GM12878 (cell line): ENCODE measurements at regions of chr12 and their contacts with region 1.

Region 1: GRCh38 chr12:79690638-79691493 is at the start of gene PAWR:
- DNase-seq: no peak
- ATAC-seq: peak; percentile 68
- H3K4me3 ChIP-seq: peak within 1 kb of the TSS; percentile 96
- H3K27ac ChIP-seq: peak within 1 kb of the TSS; percentile 86
- H3K4me1 ChIP-seq: 0 out of 2 replicates have a peak, but pooled peaks cover 5% of the 10 kb centered on the region
- H3K27me3 ChIP-seq: no peaks in the 10 kb centered on the region
- CTCF ChIP-seq: peak; percentile 19 to 57 (median 31); a peak in 4 of 6 replicates
- EP300 ChIP-seq: no peak
- POLR2A ChIP-seq: 0 out of 2 replicates have a peak, but pooled peaks have one; percentile 46
- RAD21 ChIP-seq: peak; percentile 39
- polyA plus RNA-seq, gene PAWR: 8.1 to 10.0 TPM

Region 2: GRCh38 chr12:79547735-79548609 is 142.9 kb before region 1 on chr12:
- CTCF ChIA-PET with region 1: interaction called, 24 read pairs
- POLR2A ChIA-PET with region 1: no interaction called
- RAD21 ChIA-PET with region 1: interaction called, 10 read pairs
- SMC1A ChIA-PET with region 1: interaction called, 9 read pairs
- in situ Hi-C with region 1: no loop called
- intact Hi-C with region 1: loop called (anchors 2 kb)
- DNase-seq: peak; percentile 9
- ATAC-seq: peak; percentile 88
- H3K4me3 ChIP-seq: no peak overlapping the region
- H3K27ac ChIP-seq: no peak overlapping the region
- H3K4me1 ChIP-seq: no peaks in the 10 kb centered on the region
- H3K27me3 ChIP-seq: no peaks in the 10 kb centered on the region
- CTCF ChIP-seq: peak; percentile 69 to 74 (median 71)
- EP300 ChIP-seq: no peak
- POLR2A ChIP-seq: no peak
- RAD21 ChIP-seq: peak; percentile 74

Region 3: GRCh38 chr12:79601909-79602308 is 89.0 kb before region 1 on chr12:
- CTCF ChIA-PET with region 1: no interaction called
- POLR2A ChIA-PET with region 1: interaction called, 3 read pairs
- RAD21 ChIA-PET with region 1: interaction called, 5 read pairs
- SMC1A ChIA-PET with region 1: interaction called, 3 read pairs
- in situ Hi-C with region 1: no loop called
- intact Hi-C with region 1: loop called (anchors 5 kb)
- DNase-seq: no peak
- ATAC-seq: no peak
- H3K4me3 ChIP-seq: no peak overlapping the region
- H3K27ac ChIP-seq: no peak overlapping the region
- H3K4me1 ChIP-seq: no peaks in the 10 kb centered on the region
- H3K27me3 ChIP-seq: no peaks in the 10 kb centered on the region
- CTCF ChIP-seq: no peak
- EP300 ChIP-seq: no peak
- POLR2A ChIP-seq: no peak
- RAD21 ChIP-seq: no peak

Region 4: DNA sequence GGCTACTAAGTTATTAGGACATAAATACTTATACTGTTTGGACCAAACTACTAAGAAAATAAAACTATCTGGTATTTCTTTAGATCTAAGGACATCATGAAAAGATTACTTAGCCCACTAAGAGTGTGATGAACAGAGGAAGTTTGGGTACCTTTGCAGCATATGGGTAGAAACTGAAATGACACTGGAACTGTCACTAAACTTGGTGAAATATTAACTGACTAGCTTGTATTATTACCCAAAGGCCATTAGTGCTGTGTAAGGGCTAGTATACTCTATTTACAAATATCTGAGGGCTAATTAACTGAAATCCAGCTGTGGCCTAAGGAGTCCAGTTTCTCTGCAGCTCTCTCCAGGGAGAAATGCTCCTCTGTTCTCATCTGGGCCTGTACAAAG is 45.6 kb before region 1 on chr12:
- CTCF ChIA-PET with region 1: interaction called, 6 read pairs
- POLR2A ChIA-PET with region 1: interaction called, 4 read pairs
- RAD21 ChIA-PET with region 1: interaction called, 11 read pairs
- SMC1A ChIA-PET with region 1: interaction called, 21 read pairs
- in situ Hi-C with region 1: no loop called
- intact Hi-C with region 1: loop called (anchors 5 kb)
- DNase-seq: peak; percentile 13
- ATAC-seq: peak; percentile 95
- H3K4me3 ChIP-seq: no peak overlapping the region
- H3K27ac ChIP-seq: no peak overlapping the region
- H3K4me1 ChIP-seq: no peaks in the 10 kb centered on the region
- H3K27me3 ChIP-seq: no peaks in the 10 kb centered on the region
- CTCF ChIP-seq: no peak
- EP300 ChIP-seq: no peak
- POLR2A ChIP-seq: no peak
- RAD21 ChIP-seq: no peak

Region 5: DNA sequence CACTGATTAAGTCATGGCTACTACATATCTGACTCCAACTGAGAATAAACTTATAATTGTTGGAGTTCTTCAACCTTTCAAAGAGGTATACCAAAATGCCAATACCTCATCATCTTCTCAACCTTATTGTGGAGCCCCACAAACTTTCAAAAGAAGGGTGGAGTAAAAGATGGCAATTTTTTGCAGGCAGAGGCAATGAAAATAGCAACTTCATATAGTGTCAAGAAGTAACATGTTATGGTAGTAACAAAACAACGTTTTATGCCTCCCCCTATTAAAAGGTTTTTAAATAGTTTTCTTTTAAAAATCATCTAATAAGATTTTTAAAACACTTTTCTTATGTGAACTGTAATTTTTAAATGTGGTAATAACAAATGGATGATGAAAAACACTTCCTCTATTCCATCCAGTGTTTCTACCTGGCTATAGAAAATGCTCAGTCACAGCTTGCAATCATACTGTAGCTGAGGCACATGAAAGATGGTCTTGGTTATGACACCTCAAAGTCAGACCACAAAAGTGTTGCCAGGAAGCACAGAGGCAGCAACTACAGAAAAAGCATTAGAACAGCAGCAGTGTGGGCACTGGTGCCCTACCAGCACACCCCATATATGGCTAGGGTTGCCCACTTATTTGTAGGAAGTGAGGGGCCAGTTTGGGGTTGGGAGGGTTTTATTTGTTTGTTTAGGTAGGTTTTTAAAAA is 237.1 kb after region 1 on chr12:
- CTCF ChIA-PET with region 1: no interaction called
- POLR2A ChIA-PET with region 1: no interaction called
- RAD21 ChIA-PET with region 1: no interaction called
- SMC1A ChIA-PET with region 1: no interaction called
- in situ Hi-C with region 1: loop called (anchors 10 kb)
- intact Hi-C with region 1: no loop called
- DNase-seq: peak; percentile 70
- ATAC-seq: peak; percentile 95
- H3K4me3 ChIP-seq: no peak overlapping the region
- H3K27ac ChIP-seq: peak overlapping the region; percentile 57; the same call in 1 of the 2 replicates
- H3K4me1 ChIP-seq: peaks cover 8% of the 10 kb centered on the region; the same call in 1 of the 2 replicates
- H3K27me3 ChIP-seq: no peaks in the 10 kb centered on the region
- CTCF ChIP-seq: no peak
- EP300 ChIP-seq: 0 out of 4 replicates have a peak, but pooled peaks of 1 of the 2 experiments have one; percentile 15
- POLR2A ChIP-seq: no peak
- RAD21 ChIP-seq: no peak